PC-9 (cell line): ENCODE measurements at regions of chr3 and their contacts with region 1.

Region 1: GRCh38 chr3:177448987-177449975 is 252.0 kb upstream of the TBL1XR1 start:
- DNase-seq: peak; percentile 82 to 99
- H3K4me3 ChIP-seq: peak overlapping the region; percentile 9; the same call in 1 of the 2 replicates
- H3K27ac ChIP-seq: peak overlapping the region; percentile 89
- H3K4me1 ChIP-seq: peaks cover 66% of the 10 kb centered on the region
- H3K27me3 ChIP-seq: no peaks in the 10 kb centered on the region
- CTCF ChIP-seq: no peak

Region 2: DNA sequence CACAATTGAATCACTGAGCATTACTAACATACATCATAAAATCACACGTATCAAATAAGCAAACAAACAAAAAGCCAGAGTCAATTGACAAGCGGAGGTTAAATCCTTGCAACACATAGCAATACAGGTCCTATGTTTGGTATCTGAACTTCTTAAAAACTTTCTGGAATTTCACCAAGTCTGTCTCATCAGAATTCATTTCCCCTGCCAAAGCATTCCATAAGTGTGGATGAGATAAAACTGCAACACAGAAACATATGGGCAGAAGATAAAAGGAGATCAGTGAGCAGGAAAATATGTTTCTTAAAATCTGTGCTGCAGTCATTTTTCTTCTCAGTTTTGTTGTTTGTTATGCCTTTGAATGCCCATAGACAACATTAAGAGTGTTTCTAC is 1407.5 kb before region 1 on chr3:
- CTCF ChIA-PET with region 1: no interaction called
- POLR2A ChIA-PET with region 1: no interaction called
- intact Hi-C with region 1: no loop called
- DNase-seq: no peak
- H3K4me3 ChIP-seq: no peak overlapping the region
- H3K27ac ChIP-seq: no peak overlapping the region
- H3K4me1 ChIP-seq: no peaks in the 10 kb centered on the region
- H3K27me3 ChIP-seq: no peaks in the 10 kb centered on the region
- CTCF ChIP-seq: no peak

Region 3: DNA sequence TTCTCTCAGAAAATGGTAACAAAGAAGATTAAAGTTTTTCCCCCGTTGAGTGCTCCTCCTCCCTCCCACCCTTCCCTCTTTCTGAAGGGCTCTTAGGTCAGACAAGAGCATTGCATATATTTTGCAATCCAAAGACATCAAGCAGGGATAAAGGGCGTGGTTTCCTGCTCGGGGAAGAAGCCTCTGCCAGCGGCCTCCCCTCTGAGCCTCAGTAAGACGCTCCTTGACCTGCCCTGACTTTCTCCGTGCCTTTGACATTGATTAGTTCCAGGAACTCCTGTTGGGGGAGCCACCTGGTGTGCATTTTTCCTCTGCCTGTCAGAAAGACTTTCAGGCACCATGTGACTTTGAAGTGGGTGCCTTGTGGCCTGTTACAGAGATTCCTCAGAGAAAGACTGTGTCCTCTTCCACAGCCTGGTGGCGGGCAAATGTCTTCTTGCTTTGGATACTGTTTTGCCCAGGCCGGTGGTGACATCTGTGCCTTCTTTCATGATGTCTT is 164.8 kb before region 1 on chr3:
- CTCF ChIA-PET with region 1: no interaction called
- POLR2A ChIA-PET with region 1: no interaction called
- intact Hi-C with region 1: loop called (anchors 1 kb)
- DNase-seq: no peak
- H3K4me3 ChIP-seq: no peak overlapping the region
- H3K27ac ChIP-seq: no peak overlapping the region
- H3K4me1 ChIP-seq: peaks cover 59% of the 10 kb centered on the region
- H3K27me3 ChIP-seq: no peaks in the 10 kb centered on the region
- CTCF ChIP-seq: no peak

Region 4: DNA sequence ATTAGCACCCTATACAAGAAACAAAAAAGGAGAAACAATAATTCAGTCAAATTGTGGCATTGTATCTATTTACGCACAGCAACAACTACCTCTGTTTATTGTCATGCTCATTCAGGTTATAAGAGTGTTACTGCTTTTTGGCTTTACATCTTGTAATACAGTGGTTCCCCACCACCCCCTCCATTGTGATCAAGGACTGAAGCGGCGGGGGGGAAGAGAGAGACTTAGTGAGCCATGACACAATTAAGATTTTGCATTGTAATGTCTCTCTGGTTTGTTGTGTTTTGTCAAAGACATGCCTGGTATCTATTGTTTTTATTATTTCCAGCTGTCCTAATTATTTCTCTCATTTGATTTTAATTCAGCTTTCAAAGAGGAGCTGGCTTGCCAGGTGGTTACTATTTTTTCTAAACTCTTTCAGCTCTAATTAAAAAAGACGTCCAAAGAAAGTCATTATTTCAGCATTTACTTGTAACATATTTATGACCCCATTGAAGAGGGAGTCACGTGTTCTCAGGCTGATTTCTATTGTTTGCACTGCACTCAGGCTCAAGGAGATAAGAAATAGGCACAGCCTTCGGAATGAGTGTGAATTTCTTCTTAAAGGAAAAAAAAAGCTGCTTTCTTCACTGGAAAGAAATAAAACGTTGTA is 17.6 kb before region 1 on chr3:
- CTCF ChIA-PET with region 1: no interaction called
- POLR2A ChIA-PET with region 1: no interaction called
- intact Hi-C with region 1: no loop called
- DNase-seq: no peak
- H3K4me3 ChIP-seq: no peak overlapping the region
- H3K27ac ChIP-seq: no peak overlapping the region
- H3K4me1 ChIP-seq: no peaks in the 10 kb centered on the region
- H3K27me3 ChIP-seq: no peaks in the 10 kb centered on the region
- CTCF ChIP-seq: no peak

Region 5: DNA sequence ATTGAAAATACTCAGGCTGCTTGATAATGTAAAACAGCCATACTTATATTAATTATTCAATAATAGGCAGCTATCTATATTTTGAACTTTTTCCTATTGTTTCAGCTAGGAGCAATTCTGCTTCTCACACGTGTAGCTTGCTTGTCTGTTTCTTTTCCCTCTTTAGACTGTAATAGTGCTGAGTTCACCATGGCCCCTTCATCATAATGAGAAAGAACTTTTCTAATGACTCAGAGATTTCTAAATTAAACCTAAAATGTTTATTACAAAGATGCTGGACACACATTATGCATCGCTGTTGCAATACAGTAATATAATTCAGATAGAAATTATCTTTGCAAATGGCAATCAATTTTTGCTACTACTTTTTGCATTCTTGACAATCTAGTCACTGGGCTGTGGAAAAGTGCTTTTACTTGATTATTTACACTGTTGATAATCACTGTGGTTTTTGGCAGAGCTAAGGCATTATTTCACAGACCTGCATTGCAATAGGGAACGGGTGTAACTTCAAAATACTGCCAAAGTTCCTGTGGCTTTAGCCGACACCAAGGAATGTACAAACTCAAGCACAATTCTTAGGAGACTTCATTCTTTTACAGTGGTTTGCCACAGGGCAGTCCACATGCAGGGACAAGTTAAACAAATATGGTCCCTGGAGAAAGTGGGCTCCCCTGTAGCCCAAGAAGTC is 29.0 kb after region 1 on chr3:
- CTCF ChIA-PET with region 1: interaction called, 3 read pairs
- POLR2A ChIA-PET with region 1: no interaction called
- intact Hi-C with region 1: loop called (anchors 1 kb)
- DNase-seq: peak; percentile 84 to 100
- H3K4me3 ChIP-seq: no peak overlapping the region
- H3K27ac ChIP-seq: peak overlapping the region; percentile 85
- H3K4me1 ChIP-seq: peaks cover 33% of the 10 kb centered on the region
- H3K27me3 ChIP-seq: no peaks in the 10 kb centered on the region
- CTCF ChIP-seq: no peak

Region 6: GRCh38 chr3:177603148-177603603 is 153.9 kb after region 1 on chr3:
- CTCF ChIA-PET with region 1: no interaction called
- POLR2A ChIA-PET with region 1: no interaction called
- intact Hi-C with region 1: loop called (anchors 2 kb)
- DNase-seq: no peak
- H3K4me3 ChIP-seq: peak overlapping the region; percentile 9; the same call in 1 of the 2 replicates
- H3K27ac ChIP-seq: peak overlapping the region; percentile 89
- H3K4me1 ChIP-seq: peaks cover 61% of the 10 kb centered on the region
- H3K27me3 ChIP-seq: no peaks in the 10 kb centered on the region
- CTCF ChIP-seq: no peak

Region 7: GRCh38 chr3:177810162-177810623 is 360.9 kb after region 1 on chr3:
- CTCF ChIA-PET with region 1: no interaction called
- POLR2A ChIA-PET with region 1: no interaction called
- intact Hi-C with region 1: loop called (anchors 1 kb)
- DNase-seq: peak in 1 of 2 experiments; percentile 99
- H3K4me3 ChIP-seq: no peak overlapping the region
- H3K27ac ChIP-seq: peak overlapping the region; percentile 82
- H3K4me1 ChIP-seq: peaks cover 34% of the 10 kb centered on the region
- H3K27me3 ChIP-seq: no peaks in the 10 kb centered on the region
- CTCF ChIP-seq: no peak

Region 8: GRCh38 chr3:177928156-177928873 is 479.0 kb after region 1 on chr3:
- CTCF ChIA-PET with region 1: no interaction called
- POLR2A ChIA-PET with region 1: no interaction called
- intact Hi-C with region 1: loop called (anchors 2 kb)
- DNase-seq: peak in 1 of 2 experiments; percentile 81
- H3K4me3 ChIP-seq: no peak overlapping the region
- H3K27ac ChIP-seq: peak overlapping the region; percentile 59
- H3K4me1 ChIP-seq: peaks cover 22% of the 10 kb centered on the region
- H3K27me3 ChIP-seq: no peaks in the 10 kb centered on the region
- CTCF ChIP-seq: no peak